Posterior vena cava (tissue), 2 donors: ENCODE measurements at regions of chr11 and their contacts with region 1.

Region 1: DNA sequence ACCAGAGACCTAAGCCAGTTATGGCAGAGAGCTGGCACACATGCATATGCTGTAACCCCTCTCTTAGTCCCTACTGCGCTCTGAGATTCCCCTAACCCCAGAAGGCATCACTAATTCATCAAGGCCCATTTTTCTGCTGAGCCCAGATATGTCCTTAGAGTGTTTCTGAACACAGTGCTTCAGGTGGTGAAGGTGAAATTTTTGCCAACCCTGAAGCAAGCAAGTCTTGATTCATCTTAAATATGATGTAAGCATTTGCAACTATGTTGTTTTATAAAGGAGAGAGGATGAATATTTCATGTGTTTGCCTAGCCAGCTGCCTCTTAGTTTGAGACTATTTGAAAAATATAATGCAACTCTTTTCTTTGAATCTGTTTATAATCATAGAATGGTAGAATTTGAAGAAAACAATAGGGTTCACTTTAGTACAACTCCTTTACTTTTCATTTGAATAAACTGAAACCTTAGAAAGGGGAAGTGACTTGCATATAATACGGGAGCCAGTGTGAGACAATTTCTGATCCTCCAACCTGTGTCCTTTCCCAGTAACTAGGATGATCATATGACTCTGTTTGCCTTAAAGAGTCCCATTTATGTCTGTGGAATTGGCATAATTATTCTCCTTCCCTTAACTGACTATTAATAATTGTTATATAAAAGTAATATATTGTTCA is 194.3 kb upstream of the MTNR1B start:
- DNase-seq: no peak

Region 2: GRCh38 chr11:92803391-92803790 is 28.3 kb after region 1 on chr11:
- intact Hi-C with region 1: loop called in 1 of 2 experiments (anchors 2 kb)
- DNase-seq: no peak

Region 3: GRCh38 chr11:92969634-92970347 is 194.7 kb after region 1 on chr11 and contains the start of gene MTNR1B:
- intact Hi-C with region 1: no loop called
- DNase-seq: no peak
- total RNA-seq, gene MTNR1B: not detected